Endothelial cell of umbilical vein (primary cell): ENCODE measurements at regions of chr12 and their contacts with region 1.

Region 1: GRCh38 chr12:105485321-105485910 is 154.9 kb downstream of the C12orf75 start:
- DNase-seq: peak; percentile 99
- H3K4me3 ChIP-seq: no peak overlapping the region
- H3K27ac ChIP-seq: peak overlapping the region; percentile 74
- H3K4me1 ChIP-seq: peaks cover 100% of the 10 kb centered on the region
- H3K27me3 ChIP-seq: no peaks in the 10 kb centered on the region
- CTCF ChIP-seq: no peak
- POLR2A ChIP-seq: peak; percentile 90

Region 2: DNA sequence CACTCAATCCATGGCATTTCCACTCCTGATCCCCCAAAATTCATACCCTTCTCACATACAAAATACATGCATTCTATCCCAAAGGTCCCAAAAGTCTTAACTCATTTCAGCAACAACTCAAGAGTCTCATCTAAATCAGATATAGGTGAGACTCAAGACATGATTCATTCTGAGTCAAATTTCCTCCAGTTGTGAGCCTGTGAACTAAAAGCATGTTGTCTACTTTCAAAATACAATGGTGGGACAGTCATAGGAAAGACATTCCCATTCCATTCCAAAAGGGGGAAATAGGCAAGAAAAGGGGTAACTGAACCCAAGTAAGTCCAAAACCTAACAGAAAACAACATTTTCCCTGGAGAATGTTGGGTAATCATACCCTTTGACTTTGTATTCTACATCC is 51.6 kb before region 1 on chr12:
- CTCF ChIA-PET with region 1: interaction called, 4 read pairs
- POLR2A ChIA-PET with region 1: no interaction called
- dilution Hi-C with region 1: no loop called
- intact Hi-C with region 1: loop called (anchors 1 kb)
- DNase-seq: peak; percentile 96
- H3K4me3 ChIP-seq: no peak overlapping the region
- H3K27ac ChIP-seq: peak overlapping the region; percentile 98
- H3K4me1 ChIP-seq: peaks cover 18% of the 10 kb centered on the region
- H3K27me3 ChIP-seq: no peaks in the 10 kb centered on the region
- CTCF ChIP-seq: no peak
- POLR2A ChIP-seq: no peak

Region 3: GRCh38 chr12:105462831-105463230 is 22.6 kb before region 1 on chr12:
- CTCF ChIA-PET with region 1: interaction called, 41 read pairs
- POLR2A ChIA-PET with region 1: interaction called, 19 read pairs
- dilution Hi-C with region 1: no loop called
- intact Hi-C with region 1: no loop called
- DNase-seq: no peak
- H3K4me3 ChIP-seq: no peak overlapping the region
- H3K27ac ChIP-seq: no peak overlapping the region
- H3K4me1 ChIP-seq: peaks cover 61% of the 10 kb centered on the region
- H3K27me3 ChIP-seq: no peaks in the 10 kb centered on the region
- CTCF ChIP-seq: no peak
- POLR2A ChIP-seq: no peak

Region 4: GRCh38 chr12:105555556-105556295 is 70.3 kb after region 1 on chr12:
- CTCF ChIA-PET with region 1: no interaction called
- POLR2A ChIA-PET with region 1: no interaction called
- dilution Hi-C with region 1: no loop called
- intact Hi-C with region 1: loop called (anchors 2 kb)
- DNase-seq: peak; percentile 63
- H3K4me3 ChIP-seq: no peak overlapping the region
- H3K27ac ChIP-seq: peak overlapping the region; percentile 9
- H3K4me1 ChIP-seq: peaks cover 32% of the 10 kb centered on the region
- H3K27me3 ChIP-seq: no peaks in the 10 kb centered on the region
- CTCF ChIP-seq: no peak
- POLR2A ChIP-seq: no peak

Region 5: DNA sequence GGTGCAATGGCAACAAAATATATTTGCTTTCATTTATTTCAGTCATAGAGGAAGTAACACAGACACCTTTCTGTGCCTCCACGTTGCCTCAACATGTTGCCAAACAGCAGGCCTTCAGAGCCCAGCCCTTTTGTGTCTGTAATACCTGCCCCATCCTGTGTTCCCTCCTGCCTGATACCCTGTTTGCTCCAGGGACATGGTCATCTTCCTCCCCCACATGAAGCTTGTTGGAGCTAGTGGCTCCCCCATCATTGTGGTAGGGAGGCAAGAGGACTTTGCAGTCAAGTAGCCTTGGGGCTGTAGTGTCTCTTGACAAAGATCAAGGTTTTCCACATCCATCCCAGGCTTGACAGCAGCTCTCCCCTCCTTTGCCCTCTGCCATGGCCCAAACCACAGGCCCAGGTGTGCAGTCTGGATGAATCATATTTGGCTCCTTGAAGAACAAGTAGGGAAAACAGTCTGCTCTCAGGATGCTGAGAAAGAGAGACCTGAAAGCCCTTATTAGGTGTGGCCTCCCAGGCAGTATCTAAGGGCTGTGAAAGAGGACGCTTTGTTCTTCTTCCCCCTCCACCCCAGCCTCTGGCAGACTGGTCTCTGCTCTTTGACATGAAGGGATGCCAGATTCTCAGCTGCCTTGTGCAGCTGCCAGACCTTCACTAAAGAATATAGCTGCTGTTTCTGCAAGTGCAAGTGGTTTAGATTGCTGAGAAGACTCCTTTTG is 174.1 kb after region 1 on chr12:
- CTCF ChIA-PET with region 1: no interaction called
- POLR2A ChIA-PET with region 1: no interaction called
- dilution Hi-C with region 1: no loop called
- intact Hi-C with region 1: no loop called
- DNase-seq: peak; percentile 20
- H3K4me3 ChIP-seq: no peak overlapping the region
- H3K27ac ChIP-seq: no peak overlapping the region
- H3K4me1 ChIP-seq: peaks cover 9% of the 10 kb centered on the region
- H3K27me3 ChIP-seq: no peaks in the 10 kb centered on the region
- CTCF ChIP-seq: no peak
- POLR2A ChIP-seq: no peak

Region 6: DNA sequence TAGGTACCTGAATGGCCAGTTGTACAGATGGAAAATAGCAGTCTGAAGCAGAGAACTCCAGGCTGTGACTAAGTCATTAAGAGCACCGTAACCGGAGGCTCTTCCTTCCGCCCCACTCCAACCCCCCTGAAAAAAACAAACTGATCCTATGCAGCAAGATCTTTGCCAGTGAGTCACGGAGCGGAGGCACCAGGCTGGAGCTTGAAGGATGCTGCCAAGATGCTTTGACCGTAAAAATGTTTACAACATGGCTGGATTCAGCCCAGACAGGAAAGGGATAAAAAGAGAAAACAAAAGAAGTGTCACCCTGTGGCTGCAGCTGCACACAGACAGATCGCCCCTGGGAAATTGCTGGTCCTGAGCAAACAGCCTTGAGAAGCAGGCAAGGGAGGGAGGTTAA is 448.9 kb after region 1 on chr12:
- CTCF ChIA-PET with region 1: no interaction called
- POLR2A ChIA-PET with region 1: no interaction called
- dilution Hi-C with region 1: no loop called
- intact Hi-C with region 1: loop called (anchors 2 kb)
- DNase-seq: peak; percentile 96
- H3K4me3 ChIP-seq: no peak overlapping the region
- H3K27ac ChIP-seq: peak overlapping the region; percentile 90
- H3K4me1 ChIP-seq: peaks cover 35% of the 10 kb centered on the region
- H3K27me3 ChIP-seq: no peaks in the 10 kb centered on the region
- CTCF ChIP-seq: no peak
- POLR2A ChIP-seq: no peak